ENCODE measurements at regions of chr6 and their contacts with region 1.

Region 1: DNA sequence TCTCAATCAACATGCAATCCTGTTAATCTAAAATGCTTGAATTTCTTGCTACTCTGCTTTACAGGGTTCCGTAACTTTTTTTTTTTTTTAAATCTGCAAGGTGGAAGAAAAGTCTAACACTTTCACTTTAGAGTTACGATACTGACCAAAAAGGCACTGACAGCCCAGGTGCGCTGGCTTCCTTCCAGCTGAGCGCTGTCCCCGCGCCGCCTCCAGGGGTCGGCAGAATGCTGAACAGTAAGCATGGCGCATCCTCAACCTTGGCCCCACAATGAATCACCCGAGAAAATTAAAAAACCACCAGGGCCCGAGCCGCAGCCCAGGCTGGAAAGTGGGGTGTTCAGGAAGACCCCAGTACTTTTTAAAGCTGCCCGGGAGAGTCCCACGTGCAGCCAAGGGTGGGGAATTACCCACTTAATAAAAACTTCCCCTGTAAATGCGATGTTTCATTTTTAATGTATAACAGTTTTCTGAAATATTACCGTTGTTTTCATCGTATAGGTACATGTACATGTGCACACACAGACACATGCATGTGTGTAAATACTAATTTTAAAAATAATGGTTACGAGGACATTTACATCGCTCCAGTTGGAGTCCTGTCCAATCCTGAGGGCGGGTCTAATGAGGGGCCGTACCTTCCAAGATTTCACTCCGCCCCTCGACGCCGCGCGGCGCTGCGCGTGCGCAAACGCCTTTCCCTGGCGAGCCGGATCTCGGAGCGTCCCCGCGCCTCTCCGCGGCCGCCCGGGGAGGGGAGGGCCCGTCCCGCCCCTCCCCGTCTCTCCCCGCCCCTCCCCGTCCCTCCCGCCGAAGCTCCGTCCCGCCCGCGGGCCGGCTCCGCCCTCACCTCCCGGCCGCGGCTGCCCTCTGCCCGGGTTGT is at the start of gene GINM1:
- DNase-seq: peak; percentile 98
- total RNA-seq, gene GINM1: 53.8 TPM

Region 2: DNA sequence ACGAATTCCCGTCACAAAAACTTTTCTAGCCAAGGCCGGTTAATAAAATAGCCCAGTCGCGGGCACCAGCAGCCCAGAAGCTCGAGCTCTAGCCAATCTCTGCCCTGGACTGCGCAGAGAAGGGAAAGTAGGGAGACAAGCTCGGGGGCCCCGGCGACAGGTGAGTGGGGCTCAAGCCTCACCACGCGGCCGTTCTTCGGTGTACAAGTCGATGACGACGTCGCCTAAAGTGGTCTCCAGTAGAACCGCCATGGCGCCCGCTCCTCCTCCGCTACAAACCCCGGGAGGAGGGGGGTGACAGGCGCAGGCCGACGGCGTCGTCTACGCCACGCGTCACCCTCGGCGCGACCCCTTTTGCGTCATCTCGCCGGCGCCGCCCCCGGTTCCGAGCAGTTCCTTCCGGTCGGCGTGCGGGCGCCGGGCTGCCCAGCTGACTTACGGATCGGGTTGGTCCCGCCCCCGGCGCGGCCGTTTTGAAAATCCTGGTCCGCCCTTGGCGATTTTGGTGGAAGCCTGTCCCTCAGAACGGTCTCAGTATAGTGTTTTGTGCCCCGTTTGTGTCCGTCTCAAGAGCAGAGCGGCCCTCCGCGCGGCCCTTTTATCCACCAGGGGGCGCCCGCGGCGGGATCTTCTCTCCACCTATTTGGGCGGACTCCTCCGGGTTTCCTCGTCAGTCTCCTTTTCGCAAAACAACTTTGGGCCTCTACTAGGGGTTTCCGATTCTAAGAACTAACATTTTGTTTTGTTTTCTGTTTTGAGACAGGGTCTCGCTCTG is 19.8 kb before region 1 on chr6 and contains the start of gene PPIL4:
- intact Hi-C with region 1: loop called (anchors 2 kb)
- DNase-seq: peak; percentile 97
- total RNA-seq, gene PPIL4: 18.6 TPM

Region 3: DNA sequence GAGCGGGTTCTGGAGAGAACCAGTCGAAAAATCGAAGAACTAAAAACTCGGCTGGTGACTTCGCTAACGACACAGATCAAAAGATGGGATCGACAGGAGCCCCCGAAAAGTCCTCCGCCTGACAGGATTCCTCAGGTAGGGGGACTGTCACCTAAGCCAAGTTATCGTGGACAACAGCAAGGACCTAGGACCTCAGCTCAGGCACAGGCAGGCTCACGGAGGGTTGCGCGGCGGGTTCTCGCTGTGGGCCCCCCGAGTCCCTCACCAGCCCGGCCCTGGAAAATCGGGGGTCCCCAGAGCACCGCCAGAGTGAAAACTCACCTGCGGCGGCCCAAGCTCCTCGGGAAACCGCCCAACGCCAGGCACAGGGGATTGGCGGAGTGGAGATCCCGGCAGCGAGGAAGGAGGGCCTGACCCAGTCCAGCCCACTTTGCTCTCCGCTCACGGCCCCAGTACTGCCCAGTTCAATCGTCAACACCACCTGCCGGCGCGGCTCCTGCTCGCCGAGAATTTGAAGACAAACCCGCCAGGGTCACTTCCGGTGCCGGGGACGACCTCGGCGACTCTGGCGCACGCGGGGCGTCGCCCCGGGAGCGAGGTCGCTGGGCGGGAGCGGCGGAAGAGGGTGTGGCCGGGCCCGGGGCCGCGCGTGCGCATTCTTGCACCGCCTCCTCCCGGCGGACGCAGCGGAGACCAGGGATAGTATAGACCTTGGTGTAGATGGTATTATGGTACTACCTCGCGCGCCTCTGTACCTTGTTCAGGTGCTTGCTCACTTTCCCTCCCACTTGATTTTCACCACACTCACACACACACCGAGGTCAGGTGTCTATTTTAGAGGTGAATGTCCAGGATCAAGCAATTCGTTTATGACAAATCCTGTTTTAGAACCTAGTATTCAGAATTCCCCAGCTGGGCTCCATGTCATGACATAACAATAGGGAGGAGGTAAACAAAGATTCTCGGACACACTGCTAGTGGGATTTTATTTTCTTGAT is 82.7 kb after region 1 on chr6 and contains the start of gene KATNA1:
- intact Hi-C with region 1: loop called (anchors 2 kb)
- DNase-seq: peak; percentile 93
- total RNA-seq, gene KATNA1: 13.1 TPM

Region 4: GRCh38 chr6:149717588-149718458 is 152.1 kb after region 1 on chr6 and contains the start of gene LATS1:
- intact Hi-C with region 1: loop called (anchors 5 kb)
- DNase-seq: peak; percentile 96
- total RNA-seq, gene LATS1: 14.6 TPM